CD8-positive, alpha-beta memory T cell (primary cell): ENCODE measurements at regions of chr5 and their contacts with region 1.

Region 1: GRCh38 chr5:147822686-147823491 is 8.6 kb downstream of the SPINK1 start:
- DNase-seq: peak; percentile 5 to 52 (median 18)
- H3K4me3 ChIP-seq: no peak overlapping the region
- H3K4me3 Mint-ChIP-seq: no peak overlapping the region
- H3K27ac ChIP-seq: no peak overlapping the region
- H3K27ac Mint-ChIP-seq: no peak overlapping the region
- H3K4me1 ChIP-seq: no peaks in the 10 kb centered on the region
- H3K4me1 Mint-ChIP-seq: no peaks in the 10 kb centered on the region
- H3K27me3 ChIP-seq: no peaks in the 10 kb centered on the region
- H3K27me3 Mint-ChIP-seq: no peaks in the 10 kb centered on the region

Region 2: DNA sequence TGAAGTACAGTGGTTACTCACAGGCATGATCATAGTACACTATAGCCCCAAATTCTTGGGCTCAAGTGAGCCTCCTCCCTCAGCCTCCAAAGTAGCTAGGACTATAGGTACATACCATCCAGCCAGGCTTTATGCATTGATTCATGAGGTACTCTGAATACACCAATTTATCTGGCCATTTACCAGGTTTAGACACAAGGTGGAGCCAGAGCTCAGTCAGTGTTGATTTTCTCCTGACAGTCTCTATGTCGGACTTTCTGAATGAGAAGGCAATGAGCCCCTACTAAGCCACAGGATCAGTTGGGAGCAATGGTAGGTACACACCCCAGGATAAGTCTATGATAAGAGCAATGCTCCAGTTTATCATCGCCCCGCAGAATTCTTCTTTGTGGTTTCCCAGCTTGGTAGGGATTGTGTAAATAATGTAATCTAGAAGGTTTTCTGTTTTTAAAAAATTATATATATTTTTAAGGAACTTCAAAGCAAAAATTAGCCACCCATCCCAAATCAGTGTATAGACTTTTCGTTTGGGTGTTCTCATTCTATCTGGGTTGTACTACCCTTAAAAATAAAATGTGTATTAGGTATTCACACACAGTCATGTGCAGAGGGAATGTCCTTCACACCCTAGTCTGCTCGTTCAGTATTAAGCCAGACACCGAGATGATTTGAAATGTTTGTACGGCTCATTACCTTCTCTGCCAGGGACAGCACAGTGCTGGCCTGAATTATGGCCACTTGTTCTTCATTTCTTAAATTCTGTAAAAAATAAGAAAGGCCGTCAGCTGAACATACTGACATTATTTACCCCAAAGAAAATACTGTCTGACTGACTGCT is 194.6 kb before region 1 on chr5:
- CTCF ChIA-PET with region 1: interaction called, 59 read pairs
- POLR2A ChIA-PET with region 1: no interaction called
- DNase-seq: peak; percentile 13 to 58 (median 24)
- H3K4me3 ChIP-seq: no peak overlapping the region
- H3K4me3 Mint-ChIP-seq: no peak overlapping the region
- H3K27ac ChIP-seq: no peak overlapping the region
- H3K27ac Mint-ChIP-seq: peak overlapping the region in 2 of 8 donors; percentile 15 to 76
- H3K4me1 ChIP-seq: no peaks in the 10 kb centered on the region
- H3K4me1 Mint-ChIP-seq: peaks cover 0 to 4% (median 0%) of the 10 kb centered on the region in 3 donors
- H3K27me3 ChIP-seq: no peaks in the 10 kb centered on the region
- H3K27me3 Mint-ChIP-seq: peaks cover 0 to 3% of the 10 kb centered on the region in 2 donors

Region 3: DNA sequence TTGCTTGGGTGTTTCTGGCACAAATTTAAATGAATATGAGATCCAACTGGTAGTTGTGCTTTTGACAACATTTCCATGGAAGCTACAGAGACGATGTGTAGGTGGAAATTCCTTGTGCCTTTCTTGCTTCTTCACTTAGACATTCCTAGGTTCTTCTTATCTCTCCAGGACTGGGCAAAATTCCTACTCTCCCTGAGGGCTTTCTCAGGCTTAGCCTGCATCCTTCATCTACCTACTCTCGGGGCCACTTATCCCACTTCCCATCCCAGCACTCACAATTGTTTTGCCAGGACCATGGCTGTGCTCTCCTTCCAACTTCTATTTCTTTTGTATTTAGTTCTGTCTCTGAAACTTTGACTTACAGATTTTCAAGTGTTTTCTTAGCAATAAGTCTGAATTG is 26.3 kb after region 1 on chr5:
- CTCF ChIA-PET with region 1: no interaction called
- POLR2A ChIA-PET with region 1: no interaction called
- DNase-seq: no peak
- H3K4me3 ChIP-seq: no peak overlapping the region
- H3K4me3 Mint-ChIP-seq: no peak overlapping the region
- H3K27ac ChIP-seq: no peak overlapping the region
- H3K27ac Mint-ChIP-seq: no peak overlapping the region
- H3K4me1 ChIP-seq: no peaks in the 10 kb centered on the region
- H3K4me1 Mint-ChIP-seq: no peaks in the 10 kb centered on the region
- H3K27me3 ChIP-seq: no peaks in the 10 kb centered on the region
- H3K27me3 Mint-ChIP-seq: peaks cover 3 to 14% of the 10 kb centered on the region in 2 donors

Region 4: DNA sequence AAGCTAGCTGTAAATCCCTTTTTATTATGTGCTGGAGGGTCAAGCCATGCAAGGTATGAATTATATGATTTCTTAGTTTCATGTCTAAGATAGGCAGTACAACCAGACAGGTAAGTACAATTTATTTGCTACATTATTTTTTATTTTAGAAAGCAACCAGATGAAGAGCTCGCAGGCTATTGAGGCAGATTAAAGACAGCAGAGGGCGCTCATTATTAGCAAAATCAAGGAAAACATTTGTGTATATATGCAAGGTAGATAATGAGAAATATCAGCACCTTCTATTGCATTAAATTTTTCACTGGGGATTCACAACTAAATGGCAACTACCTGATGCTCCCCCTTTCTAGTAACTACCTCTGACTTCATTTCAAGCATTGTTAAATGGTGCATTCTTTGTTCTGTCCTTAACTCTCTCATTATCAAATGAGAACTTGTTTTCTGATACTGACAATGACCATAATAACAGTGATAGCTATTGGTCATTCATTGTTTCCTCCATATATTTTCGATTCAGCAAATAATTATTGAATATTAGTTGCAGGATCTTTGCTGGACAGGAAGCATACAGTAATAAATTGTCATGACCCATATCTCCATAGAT is 64.2 kb after region 1 on chr5:
- CTCF ChIA-PET with region 1: no interaction called
- POLR2A ChIA-PET with region 1: no interaction called
- DNase-seq: no peak
- H3K4me3 ChIP-seq: no peak overlapping the region
- H3K4me3 Mint-ChIP-seq: no peak overlapping the region
- H3K27ac ChIP-seq: no peak overlapping the region
- H3K27ac Mint-ChIP-seq: no peak overlapping the region
- H3K4me1 ChIP-seq: no peaks in the 10 kb centered on the region
- H3K4me1 Mint-ChIP-seq: no peaks in the 10 kb centered on the region
- H3K27me3 ChIP-seq: no peaks in the 10 kb centered on the region
- H3K27me3 Mint-ChIP-seq: peaks cover 3 to 11% of the 10 kb centered on the region in 2 donors